Dorsolateral prefrontal cortex (tissue), 120 donors: ENCODE measurements at regions of chr6 and their contacts with region 1.

Region 1: GRCh38 chr6:12950976-12951375 is 234.4 kb downstream of the PHACTR1 start:
- DNase-seq: no peak
- H3K4me3 ChIP-seq: no peak overlapping the region
- H3K27ac ChIP-seq: peak overlapping the region in 1 of 59 donors; percentile 12
- H3K27me3 ChIP-seq: no peaks in the 10 kb centered on the region
- CTCF ChIP-seq: no peak

Region 2: GRCh38 chr6:12886961-12887775 is 63.8 kb before region 1 on chr6:
- intact Hi-C with region 1: no loop called
- DNase-seq: no peak
- H3K4me3 ChIP-seq: peak overlapping the region in 1 of 59 donors; percentile 4
- H3K27ac ChIP-seq: peak overlapping the region in 1 of 59 donors; percentile 19
- H3K27me3 ChIP-seq: peaks cover 0 to 24% (median 0%) of the 10 kb centered on the region in 45 donors
- CTCF ChIP-seq: no peak

Region 3: DNA sequence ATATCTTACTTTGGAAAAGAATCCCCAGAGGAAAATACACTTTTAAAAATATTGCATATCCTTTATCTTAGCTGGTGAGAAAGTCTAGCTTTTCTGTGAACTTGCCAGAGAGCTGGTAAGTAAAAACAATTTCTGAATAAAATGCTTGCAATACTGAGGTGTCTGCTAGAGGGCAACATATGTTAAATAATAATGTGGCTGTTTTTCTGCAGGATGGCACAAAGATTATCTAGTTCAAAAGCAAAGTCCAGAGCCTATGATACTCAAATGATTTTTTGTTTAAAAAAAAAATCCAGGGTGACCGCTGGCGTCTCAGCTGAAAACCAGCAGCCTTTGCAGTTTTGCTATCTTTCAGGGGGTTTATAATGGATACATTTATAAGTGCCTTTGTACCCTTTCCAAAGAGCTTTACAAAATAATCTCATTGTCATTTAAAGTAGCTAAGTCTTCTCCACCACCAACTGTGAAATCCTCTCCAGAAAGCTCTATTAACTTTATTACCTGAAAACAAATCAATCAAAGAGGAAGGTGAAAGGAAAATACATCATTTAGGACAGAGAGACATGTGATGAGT is 39.5 kb before region 1 on chr6:
- intact Hi-C with region 1: loop called in 1 of 2 experiments (anchors 5 kb)
- DNase-seq: no peak
- H3K4me3 ChIP-seq: peak overlapping the region in 1 of 59 donors; percentile 8
- H3K27ac ChIP-seq: peak overlapping the region in 8 of 59 donors; percentile 14 to 49 (median 26)
- H3K27me3 ChIP-seq: no peaks in the 10 kb centered on the region
- CTCF ChIP-seq: peak; percentile 41 to 83 (median 68)

Region 4: DNA sequence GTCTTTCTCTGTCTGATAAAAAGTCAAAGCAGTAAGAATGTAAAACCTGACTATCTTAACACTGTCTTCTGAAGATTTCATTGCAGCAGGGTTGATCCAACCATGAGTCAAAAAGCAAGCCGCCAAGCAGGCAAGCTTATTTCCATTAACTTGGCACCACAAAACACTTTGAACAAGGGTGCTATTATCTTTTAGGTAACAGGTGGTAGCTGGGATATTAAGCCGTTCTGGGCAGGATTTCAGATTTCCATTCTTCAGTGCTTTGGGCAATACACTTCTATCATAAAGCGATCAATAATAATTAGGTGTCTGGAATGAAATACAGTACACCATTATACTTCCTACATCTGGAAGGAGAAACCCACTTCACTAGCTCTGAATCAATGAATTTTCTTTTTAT is 195.5 kb after region 1 on chr6:
- intact Hi-C with region 1: no loop called
- DNase-seq: no peak
- H3K4me3 ChIP-seq: no peak overlapping the region
- H3K27ac ChIP-seq: peak overlapping the region in 3 of 59 donors; percentile 0 to 7 (median 2)
- H3K27me3 ChIP-seq: no peaks in the 10 kb centered on the region
- CTCF ChIP-seq: no peak